Body of pancreas (tissue), 4 donors: ENCODE measurements at regions of chr9 and their contacts with region 1.

Region 1: DNA sequence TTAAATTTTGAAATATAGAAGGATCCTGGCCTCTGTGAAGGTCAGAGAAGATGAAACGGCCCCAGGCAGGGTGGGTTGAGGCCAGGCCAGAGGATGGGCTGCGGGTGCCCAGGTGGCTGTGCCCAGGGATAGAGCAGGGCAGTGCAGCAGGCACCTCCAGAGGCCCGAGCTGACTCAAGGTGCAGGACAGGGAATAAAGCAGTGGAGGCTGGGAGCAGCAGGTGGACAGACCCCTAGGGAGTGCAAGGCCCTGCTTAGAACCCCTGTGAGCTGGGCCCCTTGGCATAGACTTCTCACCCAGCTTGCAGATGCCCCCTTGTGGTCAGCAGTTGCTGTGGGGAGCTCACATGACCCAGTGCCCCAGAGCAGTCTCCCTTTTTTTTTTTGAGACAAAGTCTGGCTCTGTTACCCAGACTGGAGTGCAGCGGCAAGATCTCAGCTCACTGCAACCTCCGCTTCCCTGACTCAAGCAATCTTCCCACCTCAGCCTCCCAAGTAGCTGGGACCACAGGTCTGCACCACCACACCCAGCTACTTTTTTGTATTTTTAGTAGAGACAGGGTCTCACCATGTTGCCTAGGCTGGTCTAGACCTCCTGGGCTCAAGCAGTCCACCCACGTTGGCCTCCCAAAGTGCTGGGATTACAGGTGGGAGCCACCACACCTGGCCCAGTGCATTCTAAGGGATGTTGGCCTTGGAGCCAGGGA is 118.8 kb downstream of the WNK2 start:
- DNase-seq: peak; percentile 69 to 81 (median 76)
- ATAC-seq: peak; percentile 66
- H3K4me3 ChIP-seq: no peak overlapping the region
- H3K27ac ChIP-seq: peak overlapping the region in 1 of 4 donors; percentile 14
- H3K4me1 ChIP-seq: peaks cover 12% of the 10 kb centered on the region
- H3K27me3 ChIP-seq: no peaks in the 10 kb centered on the region
- CTCF ChIP-seq: peak; percentile 45 to 82 (median 50)
- POLR2A ChIP-seq: no peak

Region 2: DNA sequence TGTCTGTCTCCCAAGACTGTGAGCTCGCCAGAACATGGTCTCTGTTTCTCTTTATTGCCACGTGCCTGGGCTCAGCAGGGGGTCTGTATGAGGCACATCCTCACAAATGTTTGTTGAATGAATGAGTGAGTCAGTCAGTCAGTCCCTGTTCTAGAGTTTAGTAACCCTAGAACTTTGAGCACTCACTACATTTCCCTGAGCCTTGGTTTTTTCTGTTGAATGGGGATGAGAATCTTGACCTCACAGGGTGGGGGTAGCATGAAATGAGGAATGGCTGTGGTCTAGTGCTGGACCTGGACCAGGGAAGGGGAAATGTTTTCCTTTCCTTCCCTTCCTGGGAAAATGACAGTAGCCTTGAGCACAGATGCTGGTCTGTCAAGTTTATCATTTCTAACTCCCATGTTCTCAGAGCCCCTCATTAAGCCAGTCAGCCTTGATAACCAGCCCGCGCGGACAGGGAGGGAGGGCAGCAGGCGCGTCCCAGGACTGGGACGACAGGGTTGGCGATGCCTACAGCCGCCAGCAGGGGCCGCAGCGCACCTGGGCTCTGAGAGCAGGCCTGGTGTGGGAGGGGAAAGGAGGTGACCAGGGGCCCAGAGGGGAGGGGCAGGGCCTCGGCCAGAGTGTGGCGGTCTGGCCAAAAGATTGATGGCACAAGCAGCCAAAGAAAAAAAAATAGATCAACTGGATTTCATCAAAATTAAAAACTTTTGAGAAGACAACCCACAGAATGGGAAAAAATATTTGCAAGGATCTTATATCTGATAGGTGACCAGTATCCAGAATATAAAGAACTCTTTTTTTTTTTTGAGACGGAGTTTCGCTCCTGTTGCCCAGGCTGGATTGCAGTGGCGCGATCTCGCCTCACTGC is 142.9 kb before region 1 on chr9:
- intact Hi-C with region 1: loop called (anchors 5 kb)
- DNase-seq: peak; percentile 89 to 92 (median 89)
- ATAC-seq: peak; percentile 98
- H3K4me3 ChIP-seq: no peak overlapping the region
- H3K27ac ChIP-seq: no peak overlapping the region
- H3K4me1 ChIP-seq: peaks cover 9% of the 10 kb centered on the region
- H3K27me3 ChIP-seq: no peaks in the 10 kb centered on the region
- CTCF ChIP-seq: peak; percentile 95 to 98 (median 97)
- POLR2A ChIP-seq: no peak

Region 3: DNA sequence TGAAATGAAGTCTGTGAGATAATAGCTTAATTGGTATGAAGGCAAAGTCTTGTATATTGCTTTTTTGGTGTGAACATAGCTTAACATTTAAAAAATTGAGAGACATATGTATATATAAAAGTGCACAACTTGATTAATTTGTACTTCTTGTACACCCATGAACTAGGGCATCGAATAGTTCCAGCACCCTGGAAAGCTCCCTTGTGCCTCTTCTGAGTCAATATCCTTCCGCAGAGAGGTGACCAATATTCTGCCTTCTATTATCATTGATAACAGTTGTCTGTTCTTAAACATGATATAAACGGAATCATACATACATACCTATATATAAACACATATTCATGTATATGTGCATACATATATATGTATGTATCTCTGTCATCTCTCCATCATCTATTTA is 459.1 kb after region 1 on chr9:
- intact Hi-C with region 1: no loop called
- DNase-seq: no peak
- ATAC-seq: no peak
- H3K4me3 ChIP-seq: no peak overlapping the region
- H3K27ac ChIP-seq: no peak overlapping the region
- H3K4me1 ChIP-seq: no peaks in the 10 kb centered on the region
- H3K27me3 ChIP-seq: no peaks in the 10 kb centered on the region
- CTCF ChIP-seq: no peak
- POLR2A ChIP-seq: no peak